Heart left ventricle (tissue), 16 donors: ENCODE measurements at regions of chr15 and their contacts with region 1.

Region 1: DNA sequence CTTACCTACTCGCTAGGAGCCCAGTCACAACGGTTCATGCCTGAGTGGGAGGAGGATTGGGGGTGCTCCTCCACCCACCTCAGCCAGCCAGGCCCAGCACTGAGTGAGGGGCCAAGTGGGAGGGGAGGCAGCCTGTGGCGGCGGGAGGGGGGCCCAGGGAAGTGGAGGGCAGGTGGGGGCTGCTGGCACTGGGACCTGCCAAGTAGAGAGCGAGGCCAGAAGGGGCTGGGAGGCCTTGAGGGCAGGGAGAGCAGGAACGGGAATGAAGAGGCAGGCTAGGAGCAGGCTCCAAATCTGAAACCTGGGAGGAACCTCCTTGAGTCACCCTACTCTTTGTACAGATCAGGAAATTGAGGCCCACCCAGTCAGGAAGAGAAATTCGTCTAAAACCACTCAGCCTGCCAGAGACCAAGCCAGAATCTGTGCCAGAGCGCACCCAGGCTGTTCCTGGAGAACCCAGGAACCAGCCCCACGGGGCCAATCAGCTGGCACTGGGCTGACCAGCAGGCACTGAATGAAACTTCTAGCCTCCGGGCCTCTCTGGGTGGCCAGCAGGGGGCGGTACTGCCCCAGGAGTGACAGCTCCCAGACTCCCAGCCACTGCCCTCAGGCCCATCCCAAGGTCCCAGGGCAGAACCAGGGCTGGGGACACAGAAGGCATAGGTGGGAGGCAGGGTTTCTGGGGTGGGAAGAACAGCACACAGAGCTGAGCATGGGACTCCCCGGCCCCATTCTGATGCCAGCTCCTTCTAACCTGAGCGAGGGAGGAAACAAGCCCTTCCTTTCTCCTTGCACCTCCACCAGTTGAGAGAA is 14.8 kb upstream of the CYP11A1 start:
- DNase-seq: peak; percentile 82 to 90 (median 85)
- ATAC-seq: peak; percentile 71 to 87 (median 85)
- H3K4me3 ChIP-seq: no peak overlapping the region
- H3K27ac ChIP-seq: no peak overlapping the region
- H3K4me1 ChIP-seq: peaks cover 0 to 49% (median 28%) of the 10 kb centered on the region in 12 donors
- H3K27me3 ChIP-seq: no peaks in the 10 kb centered on the region
- CTCF ChIP-seq: peak; percentile 88 to 99 (median 96)
- POLR2A ChIP-seq: no peak

Region 2: GRCh38 chr15:74422650-74423430 is 40.6 kb after region 1 on chr15:
- intact Hi-C with region 1: loop called in 1 of 10 experiments (anchors 5 kb)
- DNase-seq: no peak
- ATAC-seq: no peak
- H3K4me3 ChIP-seq: no peak overlapping the region
- H3K27ac ChIP-seq: peak overlapping the region in 2 of 12 donors; percentile 24 to 27
- H3K4me1 ChIP-seq: peaks cover 0 to 35% (median 12%) of the 10 kb centered on the region in 12 donors
- H3K27me3 ChIP-seq: no peaks in the 10 kb centered on the region
- CTCF ChIP-seq: no peak
- POLR2A ChIP-seq: no peak

Region 3: GRCh38 chr15:74438721-74439316 is 56.6 kb after region 1 on chr15:
- intact Hi-C with region 1: loop called (anchors 1 to 2 kb)
- DNase-seq: peak; percentile 62 to 83 (median 68)
- ATAC-seq: peak; percentile 39 to 69 (median 66)
- H3K4me3 ChIP-seq: no peak overlapping the region
- H3K27ac ChIP-seq: no peak overlapping the region
- H3K4me1 ChIP-seq: peaks cover 0 to 20% (median 8%) of the 10 kb centered on the region in 12 donors
- H3K27me3 ChIP-seq: no peaks in the 10 kb centered on the region
- CTCF ChIP-seq: peak; percentile 87 to 98 (median 90)
- POLR2A ChIP-seq: no peak

Region 4: GRCh38 chr15:74489518-74490338 is 107.5 kb after region 1 on chr15:
- intact Hi-C with region 1: loop called in 3 of 10 experiments (anchors 1 to 5 kb)
- DNase-seq: peak in 4 of 5 donors; percentile 18 to 35 (median 28)
- ATAC-seq: peak in 3 of 4 donors; percentile 58 to 62 (median 60)
- H3K4me3 ChIP-seq: no peak overlapping the region
- H3K27ac ChIP-seq: no peak overlapping the region
- H3K4me1 ChIP-seq: no peaks in the 10 kb centered on the region
- H3K27me3 ChIP-seq: no peaks in the 10 kb centered on the region
- CTCF ChIP-seq: peak; percentile 51 to 72 (median 62)
- POLR2A ChIP-seq: no peak

Region 5: DNA sequence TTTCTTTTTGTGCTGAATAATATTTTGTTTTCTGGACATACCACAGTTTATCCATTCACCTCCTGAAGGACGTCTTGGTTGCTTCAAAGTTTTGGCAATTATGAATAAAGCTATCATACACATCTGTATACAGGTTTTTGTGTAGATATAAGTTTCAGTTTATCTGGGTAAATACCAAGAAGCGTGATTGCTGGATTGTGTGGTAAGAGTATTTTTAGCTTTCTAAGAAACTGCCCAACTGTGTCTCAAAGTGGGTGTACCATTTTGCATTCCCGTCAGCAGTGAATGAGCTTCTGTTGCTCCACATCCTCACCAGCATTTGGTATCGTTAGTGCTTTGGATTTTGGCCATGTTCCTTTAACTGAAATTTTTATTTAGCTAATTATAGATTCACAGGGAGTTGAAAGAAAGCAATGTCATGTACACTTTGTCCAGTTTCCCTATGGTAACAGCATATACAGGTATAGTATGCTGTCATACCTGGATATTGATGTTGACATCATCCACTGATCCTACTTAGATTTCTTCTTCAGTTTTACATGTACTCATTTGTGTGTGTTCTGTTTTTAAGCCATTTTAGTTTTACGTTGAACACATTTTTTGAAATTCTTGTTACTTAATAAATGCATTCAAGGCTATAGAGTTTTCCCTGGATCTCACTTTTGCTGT is 170.7 kb after region 1 on chr15:
- intact Hi-C with region 1: no loop called
- DNase-seq: no peak
- ATAC-seq: no peak
- H3K4me3 ChIP-seq: no peak overlapping the region
- H3K27ac ChIP-seq: no peak overlapping the region
- H3K4me1 ChIP-seq: peaks cover 0 to 12% (median 2%) of the 10 kb centered on the region in 12 donors
- H3K27me3 ChIP-seq: no peaks in the 10 kb centered on the region
- CTCF ChIP-seq: no peak
- POLR2A ChIP-seq: no peak